CD8-positive, alpha-beta T cell (primary cell): ENCODE measurements at regions of chr22 and their contacts with region 1.

Region 1: DNA sequence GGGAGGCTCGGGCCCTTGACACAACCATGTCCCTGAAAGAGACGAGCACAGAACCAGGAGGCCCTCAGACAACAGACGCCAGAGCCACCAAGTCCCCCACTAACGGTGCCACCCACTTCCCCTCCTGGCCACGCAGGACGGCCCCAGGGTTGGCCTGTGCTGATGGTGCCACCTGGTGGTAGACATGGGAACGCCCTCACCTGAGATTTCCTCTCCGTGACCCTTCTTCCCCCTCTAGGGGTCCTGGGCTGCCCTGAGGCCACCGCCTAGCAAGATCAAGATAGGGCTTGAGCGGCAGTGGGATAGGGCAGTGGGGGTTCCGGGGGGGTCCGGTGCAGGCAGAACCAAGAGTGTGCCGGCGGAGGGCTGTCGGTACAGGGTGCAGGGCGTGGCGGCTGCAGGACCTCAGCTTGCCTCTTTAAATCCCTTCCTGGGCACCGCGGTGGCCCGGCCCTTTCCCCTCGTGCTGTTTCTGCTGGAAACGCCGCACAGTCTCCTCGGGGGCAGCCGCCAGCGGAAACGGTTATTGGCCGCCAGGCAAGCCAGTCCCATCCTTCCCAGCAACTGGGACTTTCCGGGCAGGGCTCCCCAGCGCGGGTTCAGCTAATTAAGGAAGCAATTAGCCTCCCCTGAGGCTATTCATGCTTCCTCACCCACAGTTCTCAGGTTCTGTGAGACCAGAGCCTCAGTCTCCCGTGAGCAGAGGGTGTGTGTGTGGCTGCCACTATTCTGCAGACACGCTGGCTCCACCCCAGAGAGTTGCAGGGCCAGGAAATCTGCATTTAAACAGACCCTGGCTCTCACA is 5.5 kb upstream of the NFAM1 start:
- DNase-seq: peak; percentile 68 to 95 (median 86)
- ATAC-seq: peak; percentile 98
- H3K4me3 ChIP-seq: peak overlapping the region; percentile 40 to 52
- H3K4me3 Mint-ChIP-seq: peak overlapping the region; percentile 74
- H3K27ac ChIP-seq: no peak overlapping the region
- H3K27ac Mint-ChIP-seq: no peak overlapping the region
- H3K4me1 ChIP-seq: peaks cover 6% of the 10 kb centered on the region
- H3K4me1 Mint-ChIP-seq: peaks cover 7% of the 10 kb centered on the region
- H3K27me3 ChIP-seq: no peaks in the 10 kb centered on the region
- H3K27me3 Mint-ChIP-seq: no peaks in the 10 kb centered on the region
- CTCF ChIP-seq: peak; percentile 96

Region 2: DNA sequence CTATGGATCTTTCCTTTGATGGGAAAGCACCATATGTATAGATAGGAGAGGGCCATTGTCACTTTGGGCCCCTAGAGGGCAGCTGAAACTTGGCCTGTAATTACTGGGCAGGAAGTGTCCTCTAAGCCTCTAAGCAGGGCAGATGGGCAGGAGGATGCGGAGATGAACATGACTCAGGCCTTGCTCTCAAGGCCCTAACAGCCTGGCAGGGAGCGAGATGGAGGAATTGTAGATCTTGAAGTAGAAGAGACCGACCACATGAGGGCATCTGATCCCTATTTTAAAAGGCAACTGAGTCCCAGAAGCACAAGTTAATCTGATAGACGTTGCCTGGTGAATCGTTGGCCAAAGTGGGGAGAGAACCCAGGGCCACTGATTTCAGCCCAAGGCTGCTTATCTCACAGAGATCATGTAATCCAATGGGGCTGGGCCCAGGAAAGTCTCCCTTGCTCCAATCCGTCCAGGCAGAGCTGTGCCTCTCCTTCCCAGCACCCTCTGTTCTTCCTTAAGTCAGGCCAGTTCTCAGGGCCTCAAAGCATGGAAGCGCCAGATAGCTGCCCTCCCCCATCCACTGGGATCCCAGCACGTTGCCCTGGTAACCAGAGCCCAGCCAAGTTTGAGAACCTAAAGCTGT is 471.0 kb before region 1 on chr22:
- CTCF ChIA-PET with region 1: interaction called, 18 read pairs
- POLR2A ChIA-PET with region 1: no interaction called
- intact Hi-C with region 1: loop called in 1 of 2 experiments (anchors 1 kb)
- DNase-seq: peak in 5 of 9 experiments; percentile 7 to 71 (median 33)
- ATAC-seq: peak; percentile 51
- H3K4me3 ChIP-seq: no peak overlapping the region
- H3K4me3 Mint-ChIP-seq: no peak overlapping the region
- H3K27ac ChIP-seq: no peak overlapping the region
- H3K27ac Mint-ChIP-seq: no peak overlapping the region
- H3K4me1 ChIP-seq: no peaks in the 10 kb centered on the region
- H3K4me1 Mint-ChIP-seq: no peaks in the 10 kb centered on the region
- H3K27me3 ChIP-seq: no peaks in the 10 kb centered on the region
- H3K27me3 Mint-ChIP-seq: peaks cover 3% of the 10 kb centered on the region
- CTCF ChIP-seq: no peak

Region 3: DNA sequence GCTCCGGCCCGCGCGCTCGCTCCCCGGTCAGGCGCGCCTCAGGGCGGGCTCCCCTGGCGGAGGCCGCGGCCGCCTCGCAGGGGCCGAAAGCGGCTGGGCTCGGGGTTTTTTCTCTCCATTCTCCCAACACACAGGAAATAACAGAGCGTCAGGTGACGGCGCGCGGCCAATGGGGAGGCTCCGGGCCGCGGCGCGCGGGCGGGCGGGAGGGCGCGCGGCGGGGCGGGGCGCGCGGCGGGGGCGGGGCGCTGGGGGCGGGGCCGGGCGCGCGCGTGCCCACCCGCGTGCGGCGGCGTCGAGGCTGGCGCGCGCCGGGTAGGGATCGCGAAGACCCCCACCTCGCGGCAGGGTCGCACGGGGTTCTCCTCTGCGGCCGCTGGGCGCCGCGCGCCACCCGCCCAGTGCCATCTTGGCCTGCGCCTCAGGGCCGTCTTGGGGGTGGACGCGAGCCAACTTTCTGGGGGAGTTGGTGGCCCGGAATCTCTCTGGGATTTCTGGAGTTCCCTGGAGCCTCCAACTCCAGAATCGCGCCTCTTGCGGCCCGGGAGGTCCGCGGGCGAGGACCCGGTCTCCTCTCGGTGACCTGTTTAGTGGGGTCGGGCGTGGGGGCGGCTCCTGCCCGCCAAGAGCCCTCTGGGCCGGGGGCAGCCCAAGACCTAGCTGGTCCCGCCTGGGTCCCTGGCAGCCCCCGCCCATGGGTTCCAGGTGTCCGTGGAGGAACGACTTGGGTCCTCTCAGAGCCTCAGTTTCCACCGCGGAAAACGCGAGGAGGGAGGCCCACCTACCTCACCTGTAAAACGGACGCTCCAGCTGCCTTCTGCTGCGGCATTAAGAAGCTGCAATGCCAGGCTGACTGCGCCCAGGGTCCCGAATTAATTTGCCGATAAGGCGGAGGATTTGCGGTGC is 166.9 kb before region 1 on chr22 and contains the start of gene TCF20:
- CTCF ChIA-PET with region 1: interaction called, 5 read pairs
- POLR2A ChIA-PET with region 1: no interaction called
- intact Hi-C with region 1: loop called in 1 of 2 experiments (anchors 5 kb)
- DNase-seq: peak; percentile 53 to 92 (median 78)
- ATAC-seq: peak; percentile 78
- H3K4me3 ChIP-seq: peak within 1 kb of the TSS; percentile 82 to 95
- H3K4me3 Mint-ChIP-seq: peak within 1 kb of the TSS; percentile 85
- H3K27ac ChIP-seq: peak within 1 kb of the TSS; percentile 73 to 74
- H3K27ac Mint-ChIP-seq: peak within 1 kb of the TSS; percentile 87
- H3K4me1 ChIP-seq: peaks cover 21% of the 10 kb centered on the region
- H3K4me1 Mint-ChIP-seq: peaks cover 29% of the 10 kb centered on the region
- H3K27me3 ChIP-seq: no peaks in the 10 kb centered on the region
- H3K27me3 Mint-ChIP-seq: no peaks in the 10 kb centered on the region
- CTCF ChIP-seq: no peak
- total RNA-seq, gene TCF20: 50.7 to 60.6 TPM

Region 4: GRCh38 chr22:42296381-42296853 is 141.3 kb before region 1 on chr22:
- CTCF ChIA-PET with region 1: no interaction called
- POLR2A ChIA-PET with region 1: interaction called, 3 read pairs
- intact Hi-C with region 1: loop called in 1 of 2 experiments (anchors 5 kb)
- DNase-seq: peak in 5 of 9 experiments; percentile 25 to 58 (median 41)
- ATAC-seq: peak; percentile 21
- H3K4me3 ChIP-seq: no peak overlapping the region
- H3K4me3 Mint-ChIP-seq: no peak overlapping the region
- H3K27ac ChIP-seq: no peak overlapping the region
- H3K27ac Mint-ChIP-seq: peak overlapping the region; percentile 77
- H3K4me1 ChIP-seq: peaks cover 68% of the 10 kb centered on the region
- H3K4me1 Mint-ChIP-seq: peaks cover 67% of the 10 kb centered on the region
- H3K27me3 ChIP-seq: no peaks in the 10 kb centered on the region
- H3K27me3 Mint-ChIP-seq: no peaks in the 10 kb centered on the region
- CTCF ChIP-seq: peak; percentile 24